Motor neuron (in vitro differentiated cells): ENCODE measurements at regions of chr14 and their contacts with region 1.

Region 1: GRCh38 chr14:53295985-53296582 is 143.0 kb upstream of the DDHD1 start:
- ATAC-seq: peak in 1 of 8 experiments; percentile 30
- H3K4me3 ChIP-seq: no peak overlapping the region
- H3K27ac ChIP-seq: no peak overlapping the region
- H3K4me1 ChIP-seq: no peaks in the 10 kb centered on the region

Region 2: DNA sequence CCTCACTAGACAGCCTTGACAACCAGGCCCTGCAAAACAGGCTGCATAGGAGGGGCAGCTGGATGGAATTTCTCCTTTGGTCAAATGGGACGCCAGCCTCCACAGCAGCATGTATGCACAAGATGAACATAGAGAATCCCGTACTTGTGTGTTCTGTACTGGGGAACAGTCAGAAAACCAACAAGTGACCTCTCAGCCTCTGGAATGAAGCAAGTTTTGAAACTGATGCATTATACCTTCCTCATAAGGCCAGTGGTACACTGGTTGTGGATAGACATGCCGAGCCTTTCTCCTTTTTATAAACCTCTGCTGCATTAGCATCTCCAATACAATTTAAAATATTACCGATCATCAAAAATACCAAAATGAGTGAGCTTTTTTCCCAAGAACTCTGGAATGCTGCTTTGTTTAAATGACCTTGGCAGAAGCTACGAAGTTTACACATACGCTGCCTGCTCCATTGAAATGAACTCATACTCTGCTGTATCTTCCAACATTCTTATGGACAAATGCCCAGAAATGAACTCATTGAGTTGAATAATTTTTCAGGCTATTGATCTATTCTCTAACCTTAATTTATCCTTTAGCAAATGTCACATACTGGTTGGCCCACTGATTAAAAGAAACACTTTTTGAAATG is 297.6 kb before region 1 on chr14:
- in situ Hi-C with region 1: loop called in 1 of 9 experiments (anchors 25 kb)
- ATAC-seq: peak in 1 of 8 experiments; percentile 23
- H3K4me3 ChIP-seq: no peak overlapping the region
- H3K27ac ChIP-seq: no peak overlapping the region
- H3K4me1 ChIP-seq: no peaks in the 10 kb centered on the region

Region 3: DNA sequence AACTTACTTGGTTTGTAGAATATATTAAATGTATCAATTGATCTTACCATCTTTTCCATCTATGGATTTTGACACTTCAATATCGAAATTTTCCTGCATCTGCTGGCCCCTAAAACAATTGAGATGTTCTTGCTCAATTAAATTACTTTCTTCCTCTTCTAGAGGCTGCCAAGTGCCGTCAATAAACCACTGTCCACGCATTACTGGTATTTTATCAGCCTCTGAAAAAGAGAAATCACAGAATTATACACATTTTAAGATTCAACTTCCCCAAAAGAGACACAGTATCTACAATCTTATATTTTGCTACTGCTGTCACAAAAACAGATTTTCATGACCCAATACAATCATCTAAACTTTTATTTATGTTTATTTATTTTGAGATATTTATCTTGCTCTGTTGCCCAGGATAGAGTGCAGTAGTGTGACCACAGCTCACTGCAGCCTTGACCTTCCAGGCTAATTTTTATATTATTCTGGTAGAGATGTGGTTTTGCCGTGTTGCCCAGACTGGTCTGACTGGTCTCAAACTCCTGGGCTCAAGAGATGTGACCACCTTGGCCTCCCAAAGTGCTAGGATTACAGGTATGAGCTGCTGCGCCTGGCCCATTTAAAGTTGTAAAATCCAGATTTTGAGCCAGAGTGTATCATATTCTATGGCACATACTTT is 192.3 kb before region 1 on chr14:
- in situ Hi-C with region 1: no loop called
- ATAC-seq: no peak
- H3K4me3 ChIP-seq: no peak overlapping the region
- H3K27ac ChIP-seq: no peak overlapping the region
- H3K4me1 ChIP-seq: no peaks in the 10 kb centered on the region

Region 4: DNA sequence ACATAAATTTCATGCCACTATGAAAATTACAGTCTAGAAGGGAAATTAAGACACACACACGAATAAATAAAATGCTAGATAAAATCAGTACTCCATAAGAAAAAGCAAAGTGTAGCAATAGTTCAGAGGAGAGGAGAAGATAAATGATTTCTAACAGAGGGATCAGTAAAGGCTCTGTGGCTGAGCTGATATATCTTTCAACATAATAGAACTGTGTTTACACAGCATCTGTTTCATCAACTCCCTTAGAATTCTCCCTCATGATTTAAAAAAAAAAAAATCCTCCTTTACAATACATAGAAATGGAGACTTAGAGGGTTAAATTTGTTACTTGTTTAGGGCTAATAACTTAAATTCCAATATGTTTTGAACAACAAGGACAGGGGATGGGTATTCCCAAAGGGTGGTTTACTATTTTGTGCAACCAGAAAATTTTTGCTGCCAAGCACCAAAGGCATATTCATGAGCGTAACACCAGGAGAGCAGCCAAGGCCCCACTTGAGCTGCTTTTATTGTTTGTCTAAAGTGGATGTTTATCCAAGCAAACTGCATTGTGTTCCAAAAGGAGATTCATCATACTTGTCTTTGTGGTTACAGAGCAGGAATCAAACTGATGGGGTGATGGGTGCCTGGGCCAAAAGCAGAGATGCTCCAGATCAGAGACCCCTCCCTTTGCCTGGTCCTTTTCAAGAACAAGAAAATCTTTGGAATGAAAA is 497.9 kb after region 1 on chr14:
- in situ Hi-C with region 1: no loop called
- ATAC-seq: peak in 4 of 8 experiments; percentile 29 to 93 (median 36)
- H3K4me3 ChIP-seq: no peak overlapping the region
- H3K27ac ChIP-seq: no peak overlapping the region
- H3K4me1 ChIP-seq: peaks cover 0 to 7% of the 10 kb centered on the region in 2 donors